ENCODE measurements at regions of chr14 and their contacts with region 1.

Region 1: DNA sequence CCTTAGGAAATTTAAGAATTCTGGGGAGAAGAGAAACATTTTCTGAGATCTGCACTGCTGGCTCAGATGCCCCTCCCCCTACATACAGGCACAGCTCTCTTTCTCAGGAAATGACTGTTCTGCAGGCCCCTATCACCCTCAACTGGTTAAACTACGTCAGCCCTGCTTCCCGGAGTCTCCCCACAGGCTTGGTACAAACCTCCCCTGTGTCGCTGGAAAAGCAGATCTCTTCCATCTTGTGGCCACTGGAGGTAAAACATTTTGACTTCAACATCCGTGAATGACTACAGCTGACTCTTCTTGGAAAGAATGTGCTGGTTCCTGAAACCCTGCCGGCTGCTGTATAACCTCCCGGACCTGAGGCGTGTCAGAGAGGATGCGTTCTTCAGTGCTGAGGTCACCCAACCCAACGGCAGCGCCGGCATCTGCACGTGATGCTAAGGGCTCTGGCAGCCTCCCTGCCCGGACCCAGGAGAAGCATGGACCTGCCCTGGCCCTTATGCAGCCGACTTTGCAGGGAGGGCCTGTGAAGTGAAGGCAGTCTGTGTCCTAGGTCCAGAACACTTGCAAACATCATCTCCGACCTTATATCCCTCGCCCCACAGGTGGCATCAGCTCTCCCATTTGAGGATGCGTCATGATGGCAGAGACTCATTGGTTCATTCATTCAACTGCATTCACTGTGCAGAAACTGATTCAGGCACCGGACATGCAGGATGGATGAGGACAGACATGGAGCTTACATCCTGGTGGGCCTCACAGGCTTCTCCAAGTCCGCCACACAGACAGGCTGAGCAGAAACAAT is 129.3 kb downstream of the GCH1 start:
- DNase-seq: peak; percentile 92
- ATAC-seq: peak; percentile 84
- H3K4me3 Mint-ChIP-seq: peak overlapping the region; percentile 63
- H3K27ac Mint-ChIP-seq: peak overlapping the region; percentile 93
- H3K4me1 Mint-ChIP-seq: peaks cover 60% of the 10 kb centered on the region
- H3K27me3 Mint-ChIP-seq: peaks cover 10% of the 10 kb centered on the region

Region 2: DNA sequence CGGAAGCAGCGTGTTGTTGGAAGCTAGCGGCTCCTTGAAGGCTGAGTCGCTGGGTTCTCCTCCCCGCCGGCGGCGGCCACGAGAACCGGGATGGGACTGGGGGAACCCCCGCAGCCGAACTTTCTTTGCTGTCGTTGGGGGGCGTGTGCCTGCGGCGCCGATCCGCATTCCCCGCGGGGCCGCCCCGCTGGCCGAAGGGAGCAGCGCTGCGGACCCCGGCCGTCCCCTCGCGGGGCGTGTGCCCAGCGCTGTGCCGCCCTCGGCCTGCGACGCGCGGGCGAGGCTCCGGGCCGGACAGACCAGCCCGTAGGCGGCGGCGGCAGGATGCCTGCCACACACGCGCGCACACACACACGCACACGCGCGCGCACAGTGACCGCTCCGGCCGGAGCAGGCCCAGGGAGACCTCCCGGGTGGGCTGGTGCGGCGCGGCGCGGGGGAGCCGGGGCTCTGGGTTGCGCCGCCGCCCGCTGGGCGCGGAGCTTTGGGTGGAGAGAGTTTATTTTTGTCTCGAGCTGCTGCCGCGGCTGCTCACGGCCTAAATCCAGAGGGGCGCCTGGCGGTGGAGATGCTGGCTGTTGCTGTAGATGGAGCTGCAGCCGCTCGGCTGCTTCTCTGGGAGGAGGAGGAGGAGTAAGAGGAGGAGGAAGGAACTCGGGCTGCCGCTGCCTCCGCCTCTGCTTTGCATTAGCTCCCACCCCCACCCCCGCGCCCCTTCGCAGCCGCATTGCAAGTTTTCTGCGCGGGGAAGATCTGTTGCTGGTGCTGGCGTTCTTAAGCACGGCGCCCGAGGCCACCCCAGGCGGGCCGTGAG is 206.8 kb before region 1 on chr14 and contains the start of gene SAMD4A:
- CTCF ChIA-PET with region 1: interaction called, 318 read pairs
- POLR2A ChIA-PET with region 1: interaction called, 20 read pairs
- DNase-seq: peak; percentile 75
- ATAC-seq: peak; percentile 45
- H3K4me3 Mint-ChIP-seq: peak within 1 kb of the TSS; percentile 94
- H3K27ac Mint-ChIP-seq: peak within 1 kb of the TSS; percentile 87
- H3K4me1 Mint-ChIP-seq: peaks cover 23% of the 10 kb centered on the region
- H3K27me3 Mint-ChIP-seq: peaks cover 21% of the 10 kb centered on the region
- total RNA-seq, gene SAMD4A: 3.6 to 3.9 TPM

Region 3: DNA sequence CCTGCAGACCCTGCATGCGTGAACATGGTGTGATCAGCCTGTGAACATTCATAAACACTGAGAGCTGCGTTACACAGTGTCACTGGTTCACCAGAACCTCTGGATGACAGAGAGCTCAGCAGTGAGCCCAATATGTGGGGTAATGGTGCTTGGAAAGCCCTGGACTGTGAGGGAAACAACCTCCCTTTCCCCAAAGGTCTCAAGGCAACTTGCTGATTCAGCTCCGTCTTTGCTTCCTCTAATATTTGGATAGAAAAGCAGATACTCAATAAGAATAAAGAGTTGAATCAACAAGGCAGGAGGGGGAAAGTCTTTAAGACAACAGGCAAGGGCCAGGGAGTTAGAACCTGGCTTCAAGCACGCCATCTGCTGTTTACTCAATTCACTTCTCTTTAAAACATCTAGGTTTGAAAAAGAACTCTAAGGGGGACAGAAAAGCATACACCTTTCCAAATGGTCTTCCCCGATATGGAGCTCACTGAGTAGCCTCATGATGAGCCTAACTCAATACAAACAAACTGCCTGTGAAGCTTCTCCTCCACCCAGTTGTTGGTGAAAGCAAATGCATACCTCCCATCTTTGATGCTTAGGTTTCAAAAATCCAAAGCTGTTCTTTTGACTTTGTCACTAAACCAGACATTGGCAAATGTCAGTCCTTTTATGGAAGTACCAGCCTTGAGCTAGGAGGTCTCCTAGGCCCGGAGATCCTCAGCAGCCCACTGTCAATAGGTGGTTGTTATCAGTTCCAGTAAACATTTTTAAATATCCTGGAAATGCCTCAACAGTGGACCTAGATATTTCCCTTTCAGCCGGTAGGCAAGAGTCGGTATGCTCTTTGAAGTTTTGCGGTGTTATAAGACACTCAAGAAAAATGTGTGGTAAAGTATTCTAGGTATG is 130.3 kb before region 1 on chr14:
- CTCF ChIA-PET with region 1: interaction called, 19 read pairs
- POLR2A ChIA-PET with region 1: interaction called, 3 read pairs
- DNase-seq: no peak
- ATAC-seq: no peak
- H3K4me3 Mint-ChIP-seq: no peak overlapping the region
- H3K27ac Mint-ChIP-seq: no peak overlapping the region
- H3K4me1 Mint-ChIP-seq: peaks cover 5% of the 10 kb centered on the region
- H3K27me3 Mint-ChIP-seq: no peaks in the 10 kb centered on the region

Region 4: DNA sequence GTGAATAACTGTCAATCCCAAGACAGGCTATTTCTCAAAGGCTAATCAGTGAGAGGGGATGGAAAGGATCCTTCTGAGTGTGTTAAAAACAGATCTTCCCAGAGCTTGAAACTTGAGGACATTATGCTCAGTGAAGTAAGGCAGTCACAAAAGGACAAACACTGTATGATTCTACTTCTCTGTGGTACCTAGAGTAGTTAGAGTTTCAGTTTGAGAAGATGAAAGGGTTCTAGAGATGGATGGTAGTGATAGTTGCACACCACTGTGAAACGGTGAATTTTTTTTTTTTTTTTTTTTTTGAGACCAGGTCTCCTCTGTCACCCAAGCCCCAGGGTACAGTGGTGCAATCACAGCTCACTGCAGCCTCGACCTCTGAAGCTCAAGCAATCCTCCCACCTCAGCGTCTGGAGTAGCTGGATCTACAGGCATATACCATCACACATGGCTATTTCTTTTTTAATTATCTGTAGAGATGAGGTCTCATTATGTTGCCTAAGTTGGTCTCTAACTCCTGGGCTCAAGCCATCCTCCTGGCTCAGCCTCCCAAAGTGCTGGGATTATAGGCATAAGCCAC is 72.6 kb before region 1 on chr14:
- CTCF ChIA-PET with region 1: interaction called, 17 read pairs
- POLR2A ChIA-PET with region 1: no interaction called
- DNase-seq: no peak
- ATAC-seq: peak; percentile 67
- H3K4me3 Mint-ChIP-seq: no peak overlapping the region
- H3K27ac Mint-ChIP-seq: no peak overlapping the region
- H3K4me1 Mint-ChIP-seq: peaks cover 12% of the 10 kb centered on the region
- H3K27me3 Mint-ChIP-seq: peaks cover 18% of the 10 kb centered on the region

Region 5: DNA sequence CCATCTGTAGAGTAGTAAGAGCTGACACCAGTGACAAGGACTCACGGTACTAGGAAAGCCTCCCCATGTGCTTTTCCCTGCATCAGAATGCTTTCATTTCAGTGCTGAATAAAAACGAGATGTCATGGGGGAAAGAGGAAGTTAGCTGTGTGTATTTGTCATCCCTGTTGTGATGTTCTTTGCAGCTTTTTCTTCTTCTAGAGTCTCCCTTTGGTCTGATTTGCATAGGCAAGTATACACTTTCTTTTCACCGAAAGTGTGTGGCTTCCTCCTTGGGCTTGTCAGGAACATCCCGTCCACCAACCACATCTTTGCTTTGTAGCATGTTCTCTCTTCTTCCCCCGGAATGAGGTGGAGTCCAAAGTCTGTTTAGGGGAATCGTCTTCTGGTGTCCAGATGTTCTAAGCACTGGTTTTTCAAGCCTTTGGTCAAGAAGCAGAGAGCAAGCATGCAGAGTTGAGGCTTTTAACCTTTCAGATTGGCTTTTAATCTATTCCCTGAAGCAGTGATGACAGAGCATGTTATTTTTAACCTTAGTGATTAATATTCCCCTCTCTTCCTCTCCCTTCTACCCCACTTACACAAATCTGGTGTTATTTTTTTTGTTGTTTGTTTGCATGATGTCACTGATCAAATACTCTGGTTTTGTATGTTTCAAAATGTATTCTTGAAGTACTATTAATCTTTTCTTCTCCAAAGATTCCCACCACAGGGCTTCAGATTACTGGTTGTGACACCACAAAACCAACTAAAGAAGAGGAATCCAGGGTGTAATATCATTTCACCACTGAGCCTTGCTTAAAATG is 43.0 kb before region 1 on chr14:
- CTCF ChIA-PET with region 1: interaction called, 80 read pairs
- POLR2A ChIA-PET with region 1: interaction called, 4 read pairs
- DNase-seq: peak; percentile 55
- ATAC-seq: peak; percentile 83
- H3K4me3 Mint-ChIP-seq: peak overlapping the region; percentile 65
- H3K27ac Mint-ChIP-seq: peak overlapping the region; percentile 88
- H3K4me1 Mint-ChIP-seq: peaks cover 64% of the 10 kb centered on the region
- H3K27me3 Mint-ChIP-seq: no peaks in the 10 kb centered on the region

Region 6: DNA sequence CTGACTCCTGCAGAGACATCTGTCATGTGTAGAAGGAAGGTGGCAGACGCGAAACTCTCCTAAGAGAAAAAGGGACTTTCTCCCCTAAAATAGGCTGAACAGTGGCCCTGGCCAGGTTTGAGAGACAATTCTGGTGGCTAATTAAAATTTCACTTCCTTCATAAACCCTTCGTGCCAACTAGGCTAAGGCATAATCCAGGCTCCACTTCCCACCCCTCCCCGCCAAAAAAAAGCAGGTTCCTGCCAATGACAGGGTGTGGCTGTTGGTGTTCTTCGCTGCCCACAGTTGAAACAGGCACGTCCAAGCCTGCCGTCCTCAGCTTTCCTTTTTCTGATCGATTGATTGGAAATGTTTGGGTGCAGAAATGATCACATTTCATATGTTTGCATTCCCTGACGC is 15.3 kb before region 1 on chr14:
- CTCF ChIA-PET with region 1: interaction called, 14 read pairs
- POLR2A ChIA-PET with region 1: interaction called, 3 read pairs
- DNase-seq: no peak
- ATAC-seq: no peak
- H3K4me3 Mint-ChIP-seq: no peak overlapping the region
- H3K27ac Mint-ChIP-seq: no peak overlapping the region
- H3K4me1 Mint-ChIP-seq: peaks cover 32% of the 10 kb centered on the region
- H3K27me3 Mint-ChIP-seq: peaks cover 3% of the 10 kb centered on the region

Measured in activated CD8-positive, alpha-beta T cell treated with anti-CD3 and anti-CD28 coated beads, Interleukin-2, amount 10 ng/mL, durations not matched to agents 7 days and 5 days (primary cell).